AG04449 (cell line): ENCODE measurements at regions of chr16 and their contacts with region 1.

Region 1: DNA sequence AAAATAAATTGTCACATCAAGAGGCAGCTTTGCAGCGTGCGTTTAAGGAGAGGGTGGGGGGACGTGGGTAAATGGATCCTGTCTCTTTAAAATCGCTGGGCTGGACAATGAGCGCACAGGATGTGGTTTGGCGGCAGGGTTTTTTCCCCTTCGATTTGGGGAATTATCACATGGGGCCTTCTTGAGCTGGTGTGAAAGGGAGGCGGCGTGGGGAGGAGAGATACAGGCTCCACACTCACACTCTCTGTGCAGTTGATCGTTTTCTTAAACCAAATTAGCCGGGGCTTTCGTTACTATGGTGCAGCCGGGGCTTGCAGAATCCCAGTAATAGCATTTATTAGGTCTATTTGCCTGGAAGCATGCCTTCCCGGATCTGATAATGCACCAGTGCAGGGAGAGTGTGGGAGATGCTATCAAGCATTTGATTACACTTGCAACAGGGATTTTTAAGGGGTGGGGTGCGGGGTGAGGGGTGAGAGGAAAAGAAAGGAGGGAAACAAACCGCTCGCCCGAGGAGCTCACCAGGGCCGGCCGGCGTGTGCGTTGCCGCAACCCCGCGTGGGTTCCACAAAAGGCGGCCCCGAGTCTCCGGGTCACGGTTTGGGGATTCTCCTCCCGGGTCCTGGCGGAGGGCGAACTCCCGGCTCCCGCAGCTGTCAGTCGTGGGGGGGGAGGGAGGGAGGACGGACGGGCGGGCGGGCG is 58.9 kb upstream of the GSE1 start:
- DNase-seq: no peak
- H3K4me3 ChIP-seq: peak overlapping the region; percentile 76
- CTCF ChIP-seq: no peak

Region 2: DNA sequence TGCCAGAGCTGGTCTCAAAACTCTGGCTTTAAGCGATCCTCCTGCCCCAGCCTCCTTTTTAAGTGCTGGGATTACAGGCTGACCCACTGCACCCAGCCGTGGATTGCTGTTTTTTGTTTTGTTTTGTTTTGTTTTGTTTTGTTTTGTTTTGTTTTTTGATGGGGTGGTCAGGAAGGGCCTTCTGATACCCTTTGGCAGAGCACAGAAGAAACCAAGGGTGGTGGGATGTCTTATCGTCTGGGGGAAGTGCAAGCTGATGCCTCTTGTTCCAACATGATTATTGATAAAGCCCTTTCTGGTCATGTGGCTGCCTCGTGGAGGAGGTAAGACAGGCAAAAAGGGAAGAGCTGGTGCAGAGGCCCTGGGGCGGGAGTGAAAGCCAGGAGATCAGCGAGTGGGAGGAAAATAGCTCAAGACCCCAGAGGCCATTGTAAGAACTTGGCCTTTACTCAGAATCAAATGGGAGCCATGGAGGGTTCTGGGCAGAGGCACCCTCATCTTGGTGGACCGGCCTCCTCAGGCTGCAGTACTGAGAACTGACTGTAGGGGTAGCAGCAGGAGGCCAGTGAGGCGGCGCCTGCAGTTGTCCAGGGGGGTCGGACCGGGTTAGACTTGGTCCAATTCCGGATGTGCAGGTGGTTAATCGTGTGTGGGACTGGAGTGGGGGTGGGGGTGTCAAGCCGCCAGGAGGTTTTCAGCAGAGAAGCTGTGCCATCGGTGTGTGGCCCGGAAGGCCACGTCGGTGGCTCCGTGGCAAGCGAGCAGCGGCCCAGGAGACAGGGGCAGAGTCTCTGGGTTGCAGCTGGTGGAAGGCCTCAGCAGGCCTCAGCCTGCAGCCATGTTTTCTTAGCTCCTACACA is 25.5 kb before region 1 on chr16:
- CTCF ChIA-PET with region 1: interaction called, 16 read pairs
- POLR2A ChIA-PET with region 1: no interaction called
- DNase-seq: no peak
- H3K4me3 ChIP-seq: no peak overlapping the region
- CTCF ChIP-seq: peak; percentile 29

Region 3: DNA sequence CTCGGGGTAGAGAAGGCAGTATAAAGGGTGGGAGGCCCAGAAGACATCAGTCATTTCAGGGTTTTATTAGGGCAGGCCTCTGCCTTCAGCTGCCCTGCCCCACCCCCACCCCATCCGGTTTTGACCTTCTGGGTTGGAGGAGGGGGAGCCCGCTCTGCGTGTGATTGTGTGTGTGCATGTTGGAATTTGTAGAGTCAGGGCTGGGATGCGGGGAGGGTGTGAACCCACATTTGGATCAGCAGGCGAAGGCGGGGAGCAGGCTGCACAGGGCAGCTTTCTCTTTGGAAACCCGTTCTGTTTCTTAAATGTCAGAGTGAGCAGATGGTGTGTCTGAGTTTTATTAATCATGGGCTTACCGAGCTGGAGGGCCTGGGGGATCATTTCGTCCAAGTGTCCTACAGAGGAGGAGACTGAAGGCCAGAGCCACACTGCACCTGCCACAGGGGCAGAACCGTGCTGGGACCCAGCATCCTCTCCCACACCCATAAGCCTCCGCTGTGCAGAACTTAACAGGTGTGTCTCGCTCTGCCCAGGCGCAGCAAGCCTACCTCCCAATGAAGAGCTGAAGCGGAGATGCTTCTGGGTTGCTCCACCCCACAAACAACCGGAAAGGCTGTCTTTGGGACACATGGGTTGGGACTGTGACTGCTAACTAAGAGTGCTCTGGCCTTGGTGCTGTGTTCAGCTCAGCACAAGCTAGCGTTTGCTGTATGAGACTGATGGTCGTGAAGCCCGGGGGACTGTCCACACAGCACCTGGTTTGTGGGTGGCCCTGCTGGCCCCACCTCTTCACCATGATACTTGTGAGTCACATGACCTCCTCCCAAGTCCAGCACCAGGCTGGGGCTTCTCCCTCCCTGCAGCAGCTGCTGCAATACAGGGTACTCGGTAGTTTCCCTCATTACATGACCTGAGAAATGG is 12.0 kb before region 1 on chr16:
- CTCF ChIA-PET with region 1: interaction called, 13 read pairs
- POLR2A ChIA-PET with region 1: interaction called, 4 read pairs
- DNase-seq: no peak
- H3K4me3 ChIP-seq: no peak overlapping the region
- CTCF ChIP-seq: no peak

Region 4: GRCh38 chr16:85564277-85565051 is 10.2 kb after region 1 on chr16:
- CTCF ChIA-PET with region 1: interaction called, 24 read pairs
- POLR2A ChIA-PET with region 1: no interaction called
- DNase-seq: no peak
- H3K4me3 ChIP-seq: no peak overlapping the region
- CTCF ChIP-seq: peak; percentile 56

Region 5: GRCh38 chr16:85569615-85570212 is 15.5 kb after region 1 on chr16:
- CTCF ChIA-PET with region 1: interaction called, 24 read pairs
- POLR2A ChIA-PET with region 1: no interaction called
- DNase-seq: no peak
- H3K4me3 ChIP-seq: no peak overlapping the region
- CTCF ChIP-seq: no peak